Dendritic cell treated with granulocyte-macrophage colony-stimulating factor and Interleukin-4, amounts not matched to agents 40 ng/mL and 50 ng/mL, for 4 days (primary cell): ENCODE measurements at regions of chr1 and their contacts with region 1.

Region 1: GRCh38 chr1:100719490-100719889 is at the start of gene VCAM1:
- H3K4me3 Mint-ChIP-seq: no peak within 1 kb of the TSS
- H3K27ac Mint-ChIP-seq: no peak within 1 kb of the TSS
- H3K4me1 Mint-ChIP-seq: peaks cover 12% of the 10 kb centered on the region
- H3K27me3 Mint-ChIP-seq: no peaks in the 10 kb centered on the region

Region 2: DNA sequence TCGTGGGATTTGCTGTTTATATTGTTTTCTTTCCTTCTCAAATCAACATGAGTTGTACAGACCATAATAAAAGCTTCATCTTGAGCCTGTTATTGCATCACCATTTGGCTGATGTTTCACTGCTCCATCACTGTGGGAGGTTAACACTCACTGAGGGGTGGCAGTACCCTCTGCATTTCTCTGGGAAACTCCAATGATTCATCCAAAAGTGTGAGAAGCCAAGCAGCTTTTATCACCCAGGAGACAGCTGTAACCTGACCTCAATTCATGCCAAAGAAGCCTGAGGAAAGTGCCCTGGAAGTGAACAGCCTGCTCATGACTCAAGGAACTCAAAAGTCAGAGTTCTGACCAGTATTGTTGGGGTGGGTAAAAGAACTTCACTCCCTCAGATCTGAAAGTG is 97.5 kb before region 1 on chr1:
- intact Hi-C with region 1: loop called (anchors 10 kb)
- H3K4me3 Mint-ChIP-seq: no peak overlapping the region
- H3K27ac Mint-ChIP-seq: no peak overlapping the region
- H3K4me1 Mint-ChIP-seq: peaks cover 16% of the 10 kb centered on the region
- H3K27me3 Mint-ChIP-seq: no peaks in the 10 kb centered on the region

Region 3: DNA sequence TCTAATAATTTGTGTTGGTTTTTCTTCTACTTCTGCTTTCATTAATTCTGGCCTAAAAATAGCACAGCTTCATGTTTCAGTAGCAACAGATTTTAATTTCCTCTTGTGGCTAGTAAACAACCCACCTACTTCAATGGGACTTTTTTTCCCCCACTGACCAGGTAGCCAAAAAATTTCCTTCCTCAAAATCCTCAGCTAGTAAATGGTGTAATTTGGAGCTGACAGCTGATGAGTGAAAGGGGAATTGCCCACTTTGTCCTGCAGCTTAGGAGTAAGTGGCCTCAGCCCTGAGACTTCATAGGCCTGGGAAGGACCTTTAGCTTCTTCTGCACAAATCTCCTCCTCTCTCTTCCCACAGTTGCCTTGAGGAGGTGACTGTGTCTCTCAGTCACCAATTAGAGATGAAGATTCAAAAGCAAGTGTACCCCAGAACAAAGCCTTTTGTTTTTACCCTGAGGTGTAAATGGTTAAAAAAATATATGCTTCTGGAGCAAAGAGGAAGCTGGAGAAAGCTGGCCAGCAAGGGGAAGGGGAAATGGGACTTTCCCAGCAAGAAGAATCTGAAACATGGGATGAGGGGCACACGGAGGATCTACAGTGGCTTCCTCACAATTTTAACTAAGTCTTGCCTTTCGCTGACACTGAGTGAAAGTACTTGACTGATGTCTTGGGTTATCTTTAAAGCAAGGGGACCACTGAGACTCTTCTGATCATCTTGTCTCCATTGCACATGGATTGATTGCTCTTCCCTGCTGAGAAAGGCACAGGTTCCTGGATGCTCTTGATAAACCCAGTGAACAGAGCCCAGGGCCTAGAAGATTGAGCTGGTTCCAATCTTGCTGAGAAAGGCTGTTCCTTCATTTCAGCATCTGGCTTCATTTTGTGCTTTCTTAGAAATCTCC is 35.8 kb before region 1 on chr1:
- intact Hi-C with region 1: loop called (anchors 5 kb)
- H3K4me3 Mint-ChIP-seq: peak overlapping the region; percentile 27
- H3K27ac Mint-ChIP-seq: peak overlapping the region; percentile 72
- H3K4me1 Mint-ChIP-seq: peaks cover 25% of the 10 kb centered on the region
- H3K27me3 Mint-ChIP-seq: no peaks in the 10 kb centered on the region

Region 4: DNA sequence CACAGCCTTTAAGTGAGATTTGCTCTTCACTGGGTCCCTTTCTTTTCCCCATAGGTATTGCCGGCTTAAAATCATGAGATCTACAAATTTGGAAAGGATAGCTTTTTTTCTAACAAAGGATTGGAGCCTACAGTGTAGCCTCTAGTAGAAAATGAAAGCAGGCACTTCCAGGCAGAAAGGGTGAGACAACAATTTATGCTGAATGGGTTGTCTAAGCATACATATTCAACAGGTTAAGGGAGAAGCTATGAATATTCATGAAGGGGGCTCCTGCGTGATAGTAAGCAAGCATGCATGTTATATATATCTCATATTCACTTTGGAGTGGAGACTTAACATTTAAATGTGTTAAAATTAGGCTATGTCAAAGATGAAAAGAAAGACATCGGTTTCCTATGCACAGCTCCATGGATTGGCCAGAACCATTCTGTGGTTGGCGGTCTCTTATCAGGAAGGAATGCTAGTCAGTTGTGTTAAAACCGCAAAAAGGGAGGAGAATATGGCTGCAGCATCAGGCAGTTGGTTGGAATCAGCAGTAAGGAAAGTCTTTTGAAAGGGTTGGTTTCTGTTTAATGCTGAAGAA is 66.1 kb after region 1 on chr1:
- intact Hi-C with region 1: no loop called
- H3K4me3 Mint-ChIP-seq: no peak overlapping the region
- H3K27ac Mint-ChIP-seq: no peak overlapping the region
- H3K4me1 Mint-ChIP-seq: peaks cover 12% of the 10 kb centered on the region
- H3K27me3 Mint-ChIP-seq: peaks cover 3% of the 10 kb centered on the region